ENCODE measurements at regions of chr19 and their contacts with region 1.

Region 1: DNA sequence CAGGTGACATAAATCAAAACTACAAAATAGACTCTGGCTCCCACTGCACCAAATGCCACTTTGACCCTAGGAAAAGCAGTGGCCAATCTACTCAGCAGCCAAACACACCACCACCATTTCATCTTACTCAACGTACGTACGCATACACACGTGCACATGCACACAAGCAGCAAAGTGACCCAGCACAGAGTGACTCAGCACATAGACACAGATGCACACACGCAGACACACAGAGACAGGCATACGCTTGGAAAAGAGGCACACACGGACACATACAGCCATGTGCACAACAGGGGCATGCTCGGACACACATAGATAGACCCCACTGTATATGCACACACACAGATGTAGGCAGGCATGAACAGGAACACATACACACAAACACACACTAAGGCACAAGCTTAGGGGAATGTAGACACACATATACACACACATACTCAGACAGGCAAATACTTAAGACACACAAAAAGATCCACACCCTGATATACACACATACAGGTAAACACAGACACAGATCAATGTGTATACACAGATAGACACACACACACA is 37.3 kb downstream of the PEPD start:
- DNase-seq: no peak
- H3K4me3 ChIP-seq: no peak overlapping the region
- H3K27ac ChIP-seq: no peak overlapping the region
- H3K4me1 ChIP-seq: no peaks in the 10 kb centered on the region
- H3K27me3 ChIP-seq: no peaks in the 10 kb centered on the region
- CTCF ChIP-seq: no peak

Region 2: GRCh38 chr19:33430674-33431277 is 53.5 kb before region 1 on chr19:
- CTCF ChIA-PET with region 1: no interaction called
- dilution Hi-C with region 1: no loop called
- in situ Hi-C with region 1: no loop called
- intact Hi-C with region 1: no loop called
- DNase-seq: peak; percentile 44
- H3K4me3 ChIP-seq: no peak overlapping the region
- H3K27ac ChIP-seq: no peak overlapping the region
- H3K4me1 ChIP-seq: no peaks in the 10 kb centered on the region
- H3K27me3 ChIP-seq: no peaks in the 10 kb centered on the region
- CTCF ChIP-seq: peak; percentile 80 to 91

Region 3: GRCh38 chr19:33501693-33502356 is 17.5 kb after region 1 on chr19:
- CTCF ChIA-PET with region 1: no interaction called
- dilution Hi-C with region 1: no loop called
- in situ Hi-C with region 1: no loop called
- intact Hi-C with region 1: no loop called
- DNase-seq: no peak
- H3K4me3 ChIP-seq: no peak overlapping the region
- H3K27ac ChIP-seq: no peak overlapping the region
- H3K4me1 ChIP-seq: peaks cover 2% of the 10 kb centered on the region
- H3K27me3 ChIP-seq: no peaks in the 10 kb centered on the region
- CTCF ChIP-seq: no peak

Region 4: DNA sequence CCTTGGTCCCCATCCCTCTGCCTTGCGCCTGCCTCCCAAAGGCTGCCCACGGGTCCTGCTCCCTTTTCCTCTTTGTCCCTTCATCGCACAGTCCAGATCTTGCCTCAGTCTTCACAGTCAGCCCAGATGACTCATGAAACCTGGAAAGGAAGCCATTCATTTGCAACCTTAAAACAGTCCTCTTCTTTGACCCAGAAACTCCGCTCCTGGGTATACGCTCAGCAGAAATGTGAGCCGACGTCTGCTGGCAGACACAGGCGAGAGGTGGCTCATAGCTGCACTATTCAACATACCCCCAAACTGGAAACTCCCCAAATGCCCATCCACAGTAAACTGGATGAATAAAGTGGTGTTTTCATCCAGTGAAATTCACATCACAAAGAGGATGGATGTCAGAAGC is 50.9 kb after region 1 on chr19:
- CTCF ChIA-PET with region 1: no interaction called
- dilution Hi-C with region 1: loop called (anchors 5 kb)
- in situ Hi-C with region 1: no loop called
- intact Hi-C with region 1: no loop called
- DNase-seq: peak; percentile 63
- H3K4me3 ChIP-seq: no peak overlapping the region
- H3K27ac ChIP-seq: no peak overlapping the region
- H3K4me1 ChIP-seq: no peaks in the 10 kb centered on the region
- H3K27me3 ChIP-seq: no peaks in the 10 kb centered on the region
- CTCF ChIP-seq: no peak